Naive thymus-derived CD4-positive, alpha-beta T cell (primary cell): ENCODE measurements at regions of chr6 and their contacts with region 1.

Region 1: DNA sequence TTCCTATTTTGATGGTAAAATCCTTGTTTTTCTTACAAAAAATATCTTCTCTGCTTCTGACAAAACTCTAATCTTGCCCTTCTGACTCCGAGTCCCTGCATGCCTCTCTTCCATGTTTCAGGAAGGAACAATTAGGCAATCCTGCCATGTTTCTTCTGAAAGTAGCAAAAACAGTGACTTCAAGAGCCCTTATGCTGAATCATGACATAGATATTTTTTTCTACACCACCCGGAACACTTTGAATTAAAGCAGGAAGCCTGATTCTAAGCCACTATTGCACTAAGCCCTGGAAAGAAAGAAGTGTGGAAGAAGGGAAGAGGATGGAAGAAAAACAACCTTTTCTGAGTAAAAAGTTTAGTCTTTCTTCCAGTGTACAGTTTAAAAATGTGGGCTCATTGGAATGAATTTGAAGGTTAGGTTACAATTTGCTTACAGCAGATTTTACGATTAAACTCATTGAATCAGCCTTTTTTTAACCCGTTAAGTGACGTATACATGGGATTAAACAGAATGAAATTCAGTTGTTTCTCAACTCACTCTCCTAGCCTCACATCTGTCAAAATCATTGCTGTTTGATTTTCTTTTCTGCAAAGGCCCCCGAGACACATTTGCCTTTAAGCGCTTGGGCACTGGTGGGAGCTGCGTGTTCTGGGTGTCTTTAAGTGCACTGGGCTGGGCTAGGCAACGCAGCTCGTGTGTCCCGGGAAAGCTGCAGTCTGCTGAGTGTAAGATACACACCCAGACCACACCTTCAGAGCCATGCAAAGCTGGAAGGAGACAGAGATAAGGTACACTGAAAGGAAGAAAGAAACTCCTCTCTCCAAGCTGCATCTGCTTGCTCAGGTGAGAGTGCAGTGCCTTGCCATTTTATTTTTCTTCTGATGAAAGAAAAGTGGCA is 159.4 kb upstream of the CITED2 start:
- DNase-seq: no peak
- ATAC-seq: no peak
- H3K4me3 ChIP-seq: no peak overlapping the region
- H3K4me3 Mint-ChIP-seq: peak overlapping the region in 1 of 10 donors; percentile 80
- H3K27ac ChIP-seq: no peak overlapping the region
- H3K27ac Mint-ChIP-seq: peak overlapping the region in 1 of 9 donors; percentile 94
- H3K4me1 ChIP-seq: peaks cover 10 to 43% of the 10 kb centered on the region in 2 donors
- H3K4me1 Mint-ChIP-seq: peaks cover 7 to 64% (median 16%) of the 10 kb centered on the region in 7 donors
- H3K27me3 ChIP-seq: no peaks in the 10 kb centered on the region
- H3K27me3 Mint-ChIP-seq: peaks cover 0 to 8% (median 0%) of the 10 kb centered on the region in 5 donors

Region 2: DNA sequence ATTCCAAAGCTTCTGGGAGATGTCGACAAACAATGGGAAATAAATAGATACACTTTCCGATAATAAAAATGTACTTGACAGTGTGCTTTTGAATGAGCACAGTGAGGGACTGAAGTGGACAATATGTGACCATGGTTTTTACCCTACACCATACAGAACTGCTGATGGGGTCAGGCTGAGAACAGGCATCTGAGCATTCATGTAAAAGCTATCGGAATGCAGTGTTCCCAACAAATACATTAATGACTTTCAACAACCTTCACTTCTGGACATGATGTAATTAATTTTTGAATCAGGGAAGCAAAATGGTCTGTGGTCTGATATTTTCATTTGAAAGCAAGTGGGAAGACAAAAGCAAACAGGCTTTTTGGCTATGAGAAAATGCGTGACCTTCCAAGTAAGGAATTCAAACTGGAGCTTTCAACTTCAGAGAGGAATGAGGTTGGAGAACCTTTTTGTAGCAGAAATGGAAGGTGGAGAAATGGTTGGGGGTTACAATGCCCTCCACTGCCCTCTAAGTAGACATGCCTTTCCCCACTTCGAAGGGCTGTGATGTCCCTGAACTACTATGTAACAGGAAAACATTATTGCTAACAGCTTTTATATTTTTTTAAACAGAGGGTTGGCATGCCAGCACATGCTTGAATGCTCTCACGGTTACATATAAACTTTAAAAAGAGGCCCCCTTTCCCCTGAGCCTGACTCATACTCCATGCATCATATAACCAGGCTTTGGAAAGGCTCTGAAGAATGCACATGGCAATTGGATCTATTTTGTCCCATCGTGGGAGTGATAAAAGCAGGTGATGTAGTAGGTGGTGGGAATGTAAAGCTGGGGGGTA is 44.2 kb after region 1 on chr6:
- CTCF ChIA-PET with region 1: no interaction called
- POLR2A ChIA-PET with region 1: no interaction called
- intact Hi-C with region 1: loop called in 1 of 2 experiments (anchors 5 kb)
- DNase-seq: no peak
- ATAC-seq: no peak
- H3K4me3 ChIP-seq: no peak overlapping the region
- H3K4me3 Mint-ChIP-seq: no peak overlapping the region
- H3K27ac ChIP-seq: no peak overlapping the region
- H3K27ac Mint-ChIP-seq: no peak overlapping the region
- H3K4me1 ChIP-seq: peaks cover 0 to 11% of the 10 kb centered on the region in 2 donors
- H3K4me1 Mint-ChIP-seq: peaks cover 12 to 19% (median 14%) of the 10 kb centered on the region in 7 donors
- H3K27me3 ChIP-seq: no peaks in the 10 kb centered on the region
- H3K27me3 Mint-ChIP-seq: peaks cover 0 to 23% (median 6%) of the 10 kb centered on the region in 5 donors